Ascending aorta (tissue), 2 donors: ENCODE measurements at regions of chr20 and their contacts with region 1.

Region 1: GRCh38 chr20:3686867-3687321 is 5.1 kb upstream of the ADAM33 start:
- DNase-seq: peak; percentile 49 to 93
- H3K4me3 ChIP-seq: peak overlapping the region in 1 of 2 donors; percentile 4
- H3K27ac ChIP-seq: peak overlapping the region; percentile 77 to 85
- H3K4me1 ChIP-seq: peaks cover 8 to 16% of the 10 kb centered on the region in 2 donors
- H3K27me3 ChIP-seq: no peaks in the 10 kb centered on the region
- CTCF ChIP-seq: no peak

Region 2: DNA sequence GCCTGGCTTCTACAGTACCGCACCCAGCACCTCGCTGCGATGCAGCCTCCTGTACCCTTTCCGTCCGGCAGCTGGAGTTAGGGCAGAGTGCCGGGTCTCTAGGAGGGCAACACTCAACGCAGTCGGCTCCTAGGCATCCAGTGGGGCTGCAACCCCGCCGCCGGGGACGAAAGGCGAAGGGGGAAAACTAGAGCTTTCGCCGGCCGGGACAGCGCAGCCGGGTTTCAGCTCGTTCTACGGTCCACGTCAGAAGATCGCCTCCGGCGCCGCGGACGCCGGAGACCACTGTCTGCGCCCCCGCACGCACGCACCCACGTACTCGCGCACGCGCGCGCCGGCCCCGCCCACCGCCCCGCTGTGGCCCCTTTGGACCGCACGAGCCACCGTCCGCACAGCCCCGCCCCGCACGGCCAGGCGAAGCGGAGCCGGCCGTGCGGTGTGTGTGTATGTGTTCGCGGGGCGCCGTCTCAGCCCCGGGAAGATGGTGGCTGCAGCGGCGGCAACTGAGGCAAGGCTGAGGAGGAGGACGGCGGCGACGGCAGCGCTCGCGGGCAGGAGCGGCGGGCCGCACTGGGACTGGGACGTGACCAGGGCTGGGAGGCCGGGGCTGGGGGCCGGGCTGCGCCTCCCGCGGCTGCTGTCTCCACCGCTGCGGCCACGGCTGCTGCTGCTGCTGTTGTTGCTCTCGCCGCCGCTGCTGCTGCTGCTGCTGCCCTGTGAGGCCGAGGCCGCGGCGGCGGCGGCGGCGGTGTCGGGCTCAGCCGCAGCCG is 216.1 kb before region 1 on chr20 and contains the start of gene ATRN:
- intact Hi-C with region 1: loop called (anchors 10 kb)
- DNase-seq: peak; percentile 55 to 94
- H3K4me3 ChIP-seq: peak within 1 kb of the TSS; percentile 93 to 99
- H3K27ac ChIP-seq: peak within 1 kb of the TSS; percentile 70 to 85
- H3K4me1 ChIP-seq: peaks cover 12 to 23% of the 10 kb centered on the region in 2 donors
- H3K27me3 ChIP-seq: no peaks in the 10 kb centered on the region
- CTCF ChIP-seq: no peak
- total RNA-seq, gene ATRN: 8.6 TPM

Region 3: GRCh38 chr20:3563548-3564177 is 123.2 kb before region 1 on chr20:
- intact Hi-C with region 1: no loop called
- DNase-seq: no peak
- H3K4me3 ChIP-seq: no peak overlapping the region
- H3K27ac ChIP-seq: no peak overlapping the region
- H3K4me1 ChIP-seq: no peaks in the 10 kb centered on the region
- H3K27me3 ChIP-seq: no peaks in the 10 kb centered on the region
- CTCF ChIP-seq: peak; percentile 37 to 57 (median 37)

Region 4: DNA sequence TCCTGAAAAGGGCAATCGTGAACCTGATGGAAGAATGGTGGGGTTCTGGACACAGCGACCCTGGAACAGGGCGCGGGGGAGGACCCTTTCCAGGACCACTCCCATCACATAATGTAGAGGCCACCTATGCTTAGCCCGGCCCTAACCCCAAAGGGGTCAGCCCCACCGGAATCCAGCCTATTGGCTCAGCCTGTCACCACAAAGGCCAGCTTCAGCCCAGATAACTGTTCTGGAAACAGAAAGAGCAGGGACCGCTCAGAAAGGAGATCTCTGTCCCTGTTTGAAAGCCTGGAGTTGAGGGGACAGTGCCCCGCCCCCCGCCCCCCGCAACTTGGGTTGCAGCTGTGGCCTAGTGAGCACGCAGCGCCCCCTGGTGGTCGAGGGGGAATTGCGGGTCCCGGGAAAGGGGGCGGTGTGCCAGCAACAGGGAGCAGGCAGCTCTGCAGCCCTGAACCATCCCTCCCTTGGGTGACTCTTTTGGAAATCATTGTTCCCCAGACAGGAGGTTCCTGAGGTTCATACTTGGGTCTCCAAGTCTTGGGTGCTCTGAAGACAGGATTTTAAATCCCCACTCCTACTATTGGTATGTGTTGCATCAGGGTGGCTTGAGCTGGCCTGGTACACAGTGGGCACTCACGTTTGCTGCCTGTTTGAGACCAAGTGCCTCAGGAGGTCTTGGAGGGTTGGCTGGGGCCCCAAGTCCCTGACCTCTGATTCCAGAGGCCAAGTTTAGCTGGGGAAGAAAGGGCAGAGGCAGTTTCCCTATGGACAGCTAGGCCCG is 24.0 kb after region 1 on chr20:
- intact Hi-C with region 1: loop called (anchors 1 kb)
- DNase-seq: peak in 1 of 2 donors; percentile 87
- H3K4me3 ChIP-seq: peak overlapping the region in 1 of 2 donors; percentile 23
- H3K27ac ChIP-seq: no peak overlapping the region
- H3K4me1 ChIP-seq: peaks cover 4 to 5% of the 10 kb centered on the region in 2 donors
- H3K27me3 ChIP-seq: no peaks in the 10 kb centered on the region
- CTCF ChIP-seq: peak; percentile 94 to 98 (median 95)

Region 5: DNA sequence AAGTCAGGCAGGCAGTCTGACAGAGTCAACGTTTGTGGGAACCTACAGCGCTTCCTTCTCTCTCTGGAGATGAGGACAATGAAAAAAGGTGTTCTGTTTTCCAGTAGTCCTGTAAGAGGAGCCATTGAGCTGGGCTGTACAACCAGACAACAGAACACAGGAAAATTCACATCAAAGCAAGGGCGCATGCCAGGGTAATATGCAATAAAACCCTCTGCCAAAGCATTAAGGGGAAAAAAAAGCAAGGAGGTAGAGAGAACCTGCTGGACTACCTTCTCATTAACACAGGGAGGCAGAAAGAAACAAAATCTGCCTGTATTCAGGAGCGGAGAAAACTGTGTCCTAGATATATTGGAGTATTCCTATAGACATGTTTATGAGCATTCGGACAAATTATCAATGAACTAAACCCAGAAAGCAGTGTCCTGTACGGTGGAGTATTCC is 327.2 kb after region 1 on chr20:
- intact Hi-C with region 1: loop called (anchors 10 kb)
- DNase-seq: peak in 1 of 2 donors; percentile 78
- H3K4me3 ChIP-seq: peak overlapping the region; percentile 91
- H3K27ac ChIP-seq: peak overlapping the region; percentile 91 to 95
- H3K4me1 ChIP-seq: peaks cover 6 to 12% of the 10 kb centered on the region in 2 donors
- H3K27me3 ChIP-seq: no peaks in the 10 kb centered on the region
- CTCF ChIP-seq: peak; percentile 43 to 54 (median 43)

Region 6: DNA sequence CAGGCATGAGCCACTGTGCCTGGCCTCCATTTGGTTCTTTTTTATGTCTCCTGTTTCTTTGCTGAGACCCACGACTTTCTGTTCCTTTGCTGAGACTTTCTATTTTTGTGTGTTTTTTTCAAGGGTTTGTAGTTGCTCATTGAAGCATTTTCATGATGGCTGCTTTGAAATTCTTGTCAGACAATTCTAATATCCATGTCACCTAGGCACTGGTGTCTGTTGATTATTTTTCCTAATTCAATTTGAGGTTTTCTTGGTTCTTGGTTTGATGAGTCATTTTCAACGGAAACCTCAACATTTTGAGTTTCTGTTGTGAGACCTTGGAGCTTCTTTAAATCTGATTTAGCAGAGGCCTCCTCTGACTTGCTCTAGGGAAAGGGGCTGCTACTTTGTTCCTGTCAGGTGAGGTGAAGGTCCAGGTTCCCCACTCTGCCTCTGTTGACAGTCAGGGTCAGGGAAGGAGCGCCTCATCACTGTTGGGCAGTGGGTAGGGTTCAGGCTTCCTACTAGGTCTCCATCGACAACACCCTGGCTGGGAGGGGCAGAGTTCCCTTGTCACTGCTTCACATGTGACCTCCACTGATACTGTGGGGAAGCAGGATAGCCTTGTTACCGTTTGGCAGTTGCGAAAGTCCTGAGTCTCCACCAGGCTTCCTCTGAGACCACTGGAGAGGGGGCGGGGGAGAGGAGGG is 395.7 kb after region 1 on chr20:
- intact Hi-C with region 1: loop called (anchors 10 kb)
- DNase-seq: peak in 1 of 2 donors; percentile 79
- H3K4me3 ChIP-seq: no peak overlapping the region
- H3K27ac ChIP-seq: peak overlapping the region; percentile 77 to 88
- H3K4me1 ChIP-seq: peaks cover 13 to 37% of the 10 kb centered on the region in 2 donors
- H3K27me3 ChIP-seq: no peaks in the 10 kb centered on the region
- CTCF ChIP-seq: no peak